OCI-LY7 (cell line): ENCODE measurements at regions of chr6 and their contacts with region 1.

Region 1: DNA sequence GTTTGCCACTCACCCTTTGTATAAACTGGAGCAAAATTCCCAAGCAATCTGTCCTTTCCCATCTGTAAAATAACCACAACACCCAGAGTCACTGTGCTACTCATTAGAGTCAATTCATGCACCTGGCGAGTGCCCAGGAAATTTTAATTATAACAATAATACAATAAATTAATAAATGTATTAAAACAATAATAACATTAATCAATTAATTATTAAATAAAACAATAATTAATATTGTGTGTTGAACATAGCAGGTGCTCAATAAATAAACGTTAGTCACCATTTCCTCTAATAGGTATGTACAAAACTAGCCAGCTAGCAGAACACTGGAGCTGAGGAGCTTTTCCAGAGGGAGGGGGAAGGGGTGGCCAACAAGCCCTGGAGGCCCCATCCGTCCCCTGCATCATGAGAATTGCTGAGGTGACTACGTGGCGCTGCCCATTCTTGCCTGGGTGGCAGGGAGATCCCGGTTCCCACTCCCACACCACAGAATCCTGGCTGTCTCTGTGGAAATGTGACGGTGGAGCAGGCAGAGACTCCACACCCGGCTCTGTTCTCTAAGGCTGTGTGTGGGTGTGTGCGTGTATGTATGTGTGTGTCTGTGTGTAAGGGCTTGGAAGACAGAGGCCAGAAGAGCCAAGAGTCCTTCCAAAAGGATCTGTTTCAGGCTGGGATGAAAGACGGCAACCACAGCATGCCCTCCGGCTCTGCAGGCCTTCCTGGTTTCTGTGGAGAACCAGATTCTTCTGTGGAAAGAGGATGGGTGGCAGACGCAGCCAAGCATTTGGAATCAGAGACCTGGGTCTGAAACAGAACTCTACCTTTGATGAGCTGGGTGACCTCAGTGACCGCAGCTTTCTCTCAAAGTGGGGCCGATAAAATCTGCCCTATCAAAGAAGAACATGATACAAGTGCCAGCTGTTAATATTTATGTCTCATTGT is 18.8 kb upstream of the EZR start:
- DNase-seq: no peak
- H3K4me3 ChIP-seq: no peak overlapping the region
- H3K27ac ChIP-seq: no peak overlapping the region
- H3K4me1 ChIP-seq: peaks cover 4% of the 10 kb centered on the region
- CTCF ChIP-seq: no peak

Region 2: DNA sequence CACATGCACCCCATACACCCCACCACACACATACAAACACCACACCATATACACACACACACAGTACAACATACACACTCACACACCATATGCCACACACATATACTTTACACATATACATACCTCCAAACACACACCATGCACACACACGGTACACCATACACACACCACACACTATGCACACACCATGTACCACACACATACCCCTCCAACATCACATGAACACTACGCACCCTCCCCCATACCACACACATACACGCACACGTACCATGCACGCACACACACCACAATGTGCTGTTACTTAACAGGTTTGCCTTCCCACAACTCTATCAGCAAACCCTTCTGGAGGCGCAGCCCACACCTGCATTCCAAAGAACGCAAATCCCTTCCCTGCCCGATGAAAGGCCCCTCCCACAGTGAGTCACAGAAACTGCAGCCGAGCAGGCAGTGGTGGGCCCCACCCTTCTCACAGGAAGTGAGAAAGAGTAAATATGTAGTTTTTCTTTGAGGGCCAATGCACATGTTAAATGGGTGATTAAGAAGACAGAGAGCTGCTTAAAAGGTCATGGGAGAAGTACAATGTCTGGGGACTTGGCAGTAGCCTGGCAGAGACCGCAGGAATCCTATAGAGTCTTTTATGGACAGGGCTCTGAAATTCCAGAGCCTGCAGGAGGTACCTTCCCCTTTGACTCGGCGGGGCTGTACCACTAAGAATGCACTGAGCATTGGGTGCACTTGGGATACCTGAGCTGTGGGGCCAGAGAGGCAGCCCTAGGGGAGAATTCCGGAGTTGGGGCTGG is 15.3 kb after region 1 on chr6:
- CTCF ChIA-PET with region 1: no interaction called
- POLR2A ChIA-PET with region 1: interaction called, 50 read pairs
- intact Hi-C with region 1: no loop called
- DNase-seq: peak; percentile 85
- H3K4me3 ChIP-seq: peak overlapping the region; percentile 55
- H3K27ac ChIP-seq: peak overlapping the region; percentile 74
- H3K4me1 ChIP-seq: peaks cover 78% of the 10 kb centered on the region
- CTCF ChIP-seq: no peak